Lower leg skin (tissue), 4 donors: ENCODE measurements at regions of chr14 and their contacts with region 1.

Region 1: GRCh38 chr14:98714626-98715425 is 557.2 kb downstream of the BCL11B start:
- DNase-seq: peak; percentile 65 to 89
- H3K4me3 ChIP-seq: no peak overlapping the region
- CTCF ChIP-seq: no peak
- POLR2A ChIP-seq: no peak

Region 2: DNA sequence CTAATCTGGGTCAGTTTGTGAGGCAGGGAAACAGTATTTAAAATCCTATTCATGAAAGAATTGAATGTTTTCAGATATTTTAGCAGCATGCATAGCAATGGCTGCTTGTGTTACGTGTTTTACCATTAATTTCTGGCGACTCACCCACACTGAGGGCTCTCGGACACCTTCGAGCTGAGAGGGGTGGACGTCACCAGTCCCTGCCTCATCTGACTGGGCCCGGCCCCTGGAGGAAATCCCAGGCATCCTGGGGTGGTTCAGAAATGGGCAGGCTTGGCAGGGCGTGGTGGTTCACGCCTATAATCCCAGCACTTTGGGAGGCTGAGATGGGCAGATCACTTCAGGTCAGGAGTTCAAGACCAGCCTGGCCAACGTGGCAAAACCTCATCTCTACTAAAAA is 1587.9 kb before region 1 on chr14:
- intact Hi-C with region 1: loop called (anchors 5 kb)
- DNase-seq: peak in 1 of 2 donors; percentile 62
- H3K4me3 ChIP-seq: no peak overlapping the region
- CTCF ChIP-seq: no peak
- POLR2A ChIP-seq: no peak